ENCODE measurements at regions of chr18 and their contacts with region 1.

Region 1: GRCh38 chr18:70431203-70431624 is 142.4 kb downstream of the SOCS6 start:
- DNase-seq: no peak
- H3K4me3 Mint-ChIP-seq: no peak overlapping the region
- H3K27ac Mint-ChIP-seq: no peak overlapping the region
- H3K4me1 Mint-ChIP-seq: no peaks in the 10 kb centered on the region
- H3K27me3 Mint-ChIP-seq: no peaks in the 10 kb centered on the region

Region 2: GRCh38 chr18:68847219-68847837 is 1583.9 kb before region 1 on chr18:
- intact Hi-C with region 1: loop called (anchors 5 kb)
- DNase-seq: no peak
- H3K4me3 Mint-ChIP-seq: no peak overlapping the region
- H3K27ac Mint-ChIP-seq: no peak overlapping the region
- H3K4me1 Mint-ChIP-seq: no peaks in the 10 kb centered on the region
- H3K27me3 Mint-ChIP-seq: no peaks in the 10 kb centered on the region

Region 3: DNA sequence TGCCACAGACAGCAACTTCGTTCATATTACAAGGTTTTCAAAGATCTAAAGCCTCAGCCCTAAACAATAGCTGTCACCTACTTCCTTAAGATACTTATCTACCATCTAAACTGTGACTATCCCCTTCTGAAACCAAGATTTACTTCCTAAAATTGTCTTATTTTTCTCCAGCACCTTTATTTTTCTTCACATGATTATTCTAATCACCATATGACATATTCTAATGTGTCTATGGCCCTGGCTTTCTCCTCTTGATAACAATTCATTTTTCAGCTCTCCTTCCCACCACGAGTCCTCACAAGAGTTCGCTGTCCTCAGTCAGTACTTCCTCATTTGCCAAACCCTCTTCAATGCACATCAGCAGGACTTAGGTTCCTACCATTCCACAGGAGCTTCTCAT is 279.6 kb before region 1 on chr18:
- intact Hi-C with region 1: no loop called
- DNase-seq: no peak
- H3K4me3 Mint-ChIP-seq: no peak overlapping the region
- H3K27ac Mint-ChIP-seq: no peak overlapping the region
- H3K4me1 Mint-ChIP-seq: peaks cover 10% of the 10 kb centered on the region
- H3K27me3 Mint-ChIP-seq: no peaks in the 10 kb centered on the region

Region 4: GRCh38 chr18:70195852-70196434 is 235.3 kb before region 1 on chr18:
- intact Hi-C with region 1: loop called (anchors 1 kb)
- DNase-seq: peak; percentile 72
- H3K4me3 Mint-ChIP-seq: no peak overlapping the region
- H3K27ac Mint-ChIP-seq: no peak overlapping the region
- H3K4me1 Mint-ChIP-seq: peaks cover 17% of the 10 kb centered on the region
- H3K27me3 Mint-ChIP-seq: no peaks in the 10 kb centered on the region

Measured in activated CD4-positive, alpha-beta T cell treated with anti-CD3 and anti-CD28 coated beads, Interleukin-2, amount 10 ng/mL, durations not matched to agents 24 days and 14 days (primary cell).